HepG2 (cell line): ENCODE measurements at regions of chr7 and their contacts with region 1.

Region 1: GRCh38 chr7:86846494-86847190 is 202.9 kb downstream of the GRM3 start:
- DNase-seq: peak; percentile 96
- ATAC-seq: peak; percentile 99
- H3K4me3 ChIP-seq: no peak overlapping the region
- H3K27ac ChIP-seq: peak overlapping the region; percentile 19
- H3K4me1 ChIP-seq: peaks cover 42% of the 10 kb centered on the region
- H3K27me3 ChIP-seq: no peaks in the 10 kb centered on the region
- CTCF ChIP-seq: no peak
- EP300 ChIP-seq: peak; percentile 66 to 92; a peak in 2 of 4 replicates
- POLR2A ChIP-seq: no peak
- RAD21 ChIP-seq: no peak

Region 2: DNA sequence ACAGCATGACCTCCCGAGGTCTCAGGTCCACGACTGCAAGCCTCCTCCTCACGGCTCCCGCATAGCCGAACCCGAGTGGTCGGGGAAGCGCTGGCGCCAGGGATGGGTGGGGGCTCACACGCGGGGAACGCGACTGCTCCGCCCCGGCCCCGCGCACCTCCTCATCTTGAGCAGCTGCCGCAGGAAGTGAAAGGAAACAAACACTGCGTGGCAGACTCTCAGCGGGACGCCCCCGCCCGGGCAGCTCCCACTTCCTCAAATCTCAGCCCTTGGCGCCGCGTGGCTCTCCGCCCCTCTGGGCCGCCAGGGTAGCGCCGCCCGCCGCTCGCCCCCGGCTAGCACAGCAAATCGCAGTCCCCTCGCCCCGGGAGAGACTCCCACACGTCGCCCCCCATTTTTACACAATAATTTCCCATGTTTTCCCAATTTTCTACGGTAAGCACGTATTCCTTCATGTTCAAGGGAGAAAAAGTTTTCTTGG is 372.9 kb after region 1 on chr7 and contains the start of gene TMEM243:
- CTCF ChIA-PET with region 1: no interaction called
- POLR2A ChIA-PET with region 1: no interaction called
- in situ Hi-C with region 1: no loop called
- intact Hi-C with region 1: loop called (anchors 5 kb)
- DNase-seq: peak; percentile 31
- ATAC-seq: peak; percentile 72
- H3K4me3 ChIP-seq: peak within 1 kb of the TSS; percentile 82 to 95 (median 89)
- H3K27ac ChIP-seq: peak within 1 kb of the TSS; percentile 55
- H3K4me1 ChIP-seq: peaks cover 41% of the 10 kb centered on the region
- H3K27me3 ChIP-seq: peaks cover 0 to 11% of the 10 kb centered on the region in 2 experiments; a peak in 2 of 5 replicates
- CTCF ChIP-seq: peak; percentile 40
- EP300 ChIP-seq: no peak
- POLR2A ChIP-seq: peak in 1 of 2 experiments; percentile 24; a peak in 2 of 4 replicates
- RAD21 ChIP-seq: no peak
- total RNA-seq, gene TMEM243: 25.1 and 31.2 TPM in 2 replicates